ENCODE measurements at regions of chr2 and their contacts with region 1.

Region 1: GRCh38 chr2:54606393-54606969 is 117.0 kb upstream of the EML6 start:
- DNase-seq: peak in 6 of 9 donors; percentile 47 to 72 (median 58)
- ATAC-seq: peak; percentile 86
- H3K4me3 ChIP-seq: peak overlapping the region; percentile 1
- H3K4me3 Mint-ChIP-seq: peak overlapping the region; percentile 61 to 93 (median 74)
- H3K27ac ChIP-seq: peak overlapping the region; percentile 74
- H3K27ac Mint-ChIP-seq: peak overlapping the region; percentile 74 to 98 (median 96)
- H3K4me1 ChIP-seq: peaks cover 18 to 68% of the 10 kb centered on the region in 2 donors
- H3K4me1 Mint-ChIP-seq: peaks cover 79 to 94% (median 91%) of the 10 kb centered on the region in 7 donors
- H3K27me3 ChIP-seq: no peaks in the 10 kb centered on the region
- H3K27me3 Mint-ChIP-seq: no peaks in the 10 kb centered on the region

Region 2: GRCh38 chr2:54492335-54492734 is 114.1 kb before region 1 on chr2:
- CTCF ChIA-PET with region 1: no interaction called
- POLR2A ChIA-PET with region 1: no interaction called
- intact Hi-C with region 1: no loop called
- DNase-seq: no peak
- ATAC-seq: no peak
- H3K4me3 ChIP-seq: no peak overlapping the region
- H3K4me3 Mint-ChIP-seq: no peak overlapping the region
- H3K27ac ChIP-seq: no peak overlapping the region
- H3K27ac Mint-ChIP-seq: no peak overlapping the region
- H3K4me1 ChIP-seq: no peaks in the 10 kb centered on the region
- H3K4me1 Mint-ChIP-seq: peaks cover 0 to 4% (median 0%) of the 10 kb centered on the region in 7 donors
- H3K27me3 ChIP-seq: no peaks in the 10 kb centered on the region
- H3K27me3 Mint-ChIP-seq: peaks cover 8 to 25% (median 16%) of the 10 kb centered on the region in 5 donors

Region 3: DNA sequence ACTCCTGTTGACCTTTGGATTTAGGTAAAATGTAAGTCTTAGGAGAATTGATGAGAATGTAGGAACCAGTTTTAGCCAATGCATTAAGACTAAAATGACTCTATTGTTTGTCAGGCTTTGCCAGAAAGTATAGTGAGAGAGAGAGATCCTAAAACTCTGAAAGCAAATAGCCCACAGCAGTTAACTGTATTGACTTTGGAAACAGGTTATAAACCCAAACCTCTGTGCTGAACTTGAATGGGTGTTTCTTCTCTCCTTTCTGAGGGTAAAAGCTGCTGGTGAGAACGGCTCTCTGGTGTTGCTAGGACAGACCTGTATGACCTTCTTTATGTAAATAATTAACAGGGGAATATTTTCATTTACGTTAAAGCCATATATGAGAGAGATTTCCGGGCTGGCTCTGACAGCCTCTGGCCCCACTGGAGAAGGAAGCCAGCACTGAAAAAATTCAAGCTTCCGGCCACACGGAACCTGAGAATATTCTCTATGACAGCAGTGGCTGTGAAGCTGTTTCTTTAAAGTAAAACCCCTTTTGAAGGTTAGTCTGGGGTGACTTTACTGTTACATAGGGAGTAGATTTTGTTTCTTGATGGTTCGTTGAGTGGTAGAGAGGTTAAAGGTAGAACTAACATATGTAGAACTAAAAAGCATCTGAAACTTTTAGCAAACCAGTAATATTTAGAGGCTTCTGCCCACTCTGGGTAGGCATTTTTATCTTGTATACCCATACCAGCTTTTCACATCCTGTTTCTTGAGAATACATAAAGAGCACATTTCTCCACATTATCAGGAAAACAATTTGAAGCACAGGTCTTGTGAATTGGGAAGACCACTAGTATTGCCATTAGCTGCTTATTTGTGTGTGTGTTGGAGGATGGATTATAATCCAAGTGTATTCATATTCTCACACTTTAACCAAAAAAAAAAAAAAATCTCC is 26.5 kb before region 1 on chr2:
- CTCF ChIA-PET with region 1: interaction called, 8 read pairs
- POLR2A ChIA-PET with region 1: interaction called, 29 read pairs
- intact Hi-C with region 1: no loop called
- DNase-seq: peak in 7 of 9 donors; percentile 56 to 83 (median 78)
- ATAC-seq: peak; percentile 88
- H3K4me3 ChIP-seq: peak overlapping the region; percentile 20
- H3K4me3 Mint-ChIP-seq: peak overlapping the region; percentile 70 to 93 (median 76)
- H3K27ac ChIP-seq: peak overlapping the region; percentile 95
- H3K27ac Mint-ChIP-seq: peak overlapping the region; percentile 85 to 98 (median 96)
- H3K4me1 ChIP-seq: peaks cover 82 to 92% of the 10 kb centered on the region in 2 donors
- H3K4me1 Mint-ChIP-seq: peaks cover 74 to 99% (median 95%) of the 10 kb centered on the region in 7 donors
- H3K27me3 ChIP-seq: no peaks in the 10 kb centered on the region
- H3K27me3 Mint-ChIP-seq: no peaks in the 10 kb centered on the region

Region 4: GRCh38 chr2:54589340-54590215 is 16.9 kb before region 1 on chr2:
- CTCF ChIA-PET with region 1: interaction called, 6 read pairs
- POLR2A ChIA-PET with region 1: interaction called, 31 read pairs
- intact Hi-C with region 1: loop called (anchors 1 kb)
- DNase-seq: peak in 6 of 9 donors; percentile 50 to 75 (median 58)
- ATAC-seq: peak; percentile 69
- H3K4me3 ChIP-seq: peak overlapping the region; percentile 34
- H3K4me3 Mint-ChIP-seq: peak overlapping the region; percentile 56 to 93 (median 82)
- H3K27ac ChIP-seq: peak overlapping the region; percentile 70
- H3K27ac Mint-ChIP-seq: peak overlapping the region; percentile 82 to 98 (median 96)
- H3K4me1 ChIP-seq: peaks cover 63 to 89% of the 10 kb centered on the region in 2 donors
- H3K4me1 Mint-ChIP-seq: peaks cover 60 to 100% (median 95%) of the 10 kb centered on the region in 7 donors
- H3K27me3 ChIP-seq: no peaks in the 10 kb centered on the region
- H3K27me3 Mint-ChIP-seq: no peaks in the 10 kb centered on the region

Region 5: GRCh38 chr2:54618646-54619565 is 12.4 kb after region 1 on chr2:
- CTCF ChIA-PET with region 1: interaction called, 3 read pairs
- POLR2A ChIA-PET with region 1: interaction called, 19 read pairs
- intact Hi-C with region 1: loop called in 1 of 2 experiments (anchors 1 kb)
- DNase-seq: peak in 1 of 9 donors; percentile 32
- ATAC-seq: no peak
- H3K4me3 ChIP-seq: no peak overlapping the region
- H3K4me3 Mint-ChIP-seq: peak overlapping the region in 8 of 10 donors; percentile 8 to 76 (median 47)
- H3K27ac ChIP-seq: peak overlapping the region; percentile 25
- H3K27ac Mint-ChIP-seq: peak overlapping the region; percentile 25 to 88 (median 79)
- H3K4me1 ChIP-seq: peaks cover 0 to 11% of the 10 kb centered on the region in 2 donors
- H3K4me1 Mint-ChIP-seq: peaks cover 19 to 65% (median 45%) of the 10 kb centered on the region in 7 donors
- H3K27me3 ChIP-seq: no peaks in the 10 kb centered on the region
- H3K27me3 Mint-ChIP-seq: no peaks in the 10 kb centered on the region

Measured in naive thymus-derived CD4-positive, alpha-beta T cell (primary cell).